A549 (cell line): ENCODE measurements at regions of chr15 and their contacts with region 1.

Region 1: GRCh38 chr15:59751552-59752413 is 62.7 kb upstream of the BNIP2 start:
- DNase-seq: peak; percentile 33 to 52
- ATAC-seq: peak; percentile 84 to 88; a peak in 5 of 6 replicates
- H3K4me3 ChIP-seq: no peak overlapping the region
- H3K27ac ChIP-seq: no peak overlapping the region
- H3K4me1 ChIP-seq: no peaks in the 10 kb centered on the region
- CTCF ChIP-seq: peak; percentile 34; the same call in 2 of the 3 replicates
- EP300 ChIP-seq: no peak
- POLR2A ChIP-seq: no peak
- RAD21 ChIP-seq: peak; percentile 40 to 58; a peak in 4 of 5 replicates

Region 2: DNA sequence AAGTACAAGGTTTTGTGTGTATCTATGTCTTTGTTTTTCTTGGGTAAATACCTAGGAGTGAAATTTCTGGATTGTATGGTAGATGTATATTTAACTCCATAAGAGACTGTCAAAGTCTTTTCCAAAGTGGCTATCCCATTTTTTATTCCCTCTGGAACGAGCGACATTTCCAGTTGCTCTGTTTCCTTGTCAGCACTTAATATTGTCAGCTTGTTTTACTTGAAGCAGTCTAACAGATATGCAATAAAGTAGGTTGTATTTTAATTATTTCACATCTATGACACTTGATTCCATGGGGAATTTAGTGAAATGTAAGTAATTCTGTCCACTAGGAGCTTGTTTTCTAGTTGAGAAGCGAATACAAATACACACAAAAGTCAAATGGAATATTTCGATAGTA is 44.2 kb before region 1 on chr15:
- CTCF ChIA-PET with region 1: no interaction called
- POLR2A ChIA-PET with region 1: no interaction called
- DNase-seq: no peak
- ATAC-seq: no peak
- H3K4me3 ChIP-seq: no peak overlapping the region
- H3K27ac ChIP-seq: no peak overlapping the region
- H3K4me1 ChIP-seq: peaks cover 18% of the 10 kb centered on the region
- CTCF ChIP-seq: no peak
- EP300 ChIP-seq: no peak
- POLR2A ChIP-seq: no peak
- RAD21 ChIP-seq: no peak

Region 3: DNA sequence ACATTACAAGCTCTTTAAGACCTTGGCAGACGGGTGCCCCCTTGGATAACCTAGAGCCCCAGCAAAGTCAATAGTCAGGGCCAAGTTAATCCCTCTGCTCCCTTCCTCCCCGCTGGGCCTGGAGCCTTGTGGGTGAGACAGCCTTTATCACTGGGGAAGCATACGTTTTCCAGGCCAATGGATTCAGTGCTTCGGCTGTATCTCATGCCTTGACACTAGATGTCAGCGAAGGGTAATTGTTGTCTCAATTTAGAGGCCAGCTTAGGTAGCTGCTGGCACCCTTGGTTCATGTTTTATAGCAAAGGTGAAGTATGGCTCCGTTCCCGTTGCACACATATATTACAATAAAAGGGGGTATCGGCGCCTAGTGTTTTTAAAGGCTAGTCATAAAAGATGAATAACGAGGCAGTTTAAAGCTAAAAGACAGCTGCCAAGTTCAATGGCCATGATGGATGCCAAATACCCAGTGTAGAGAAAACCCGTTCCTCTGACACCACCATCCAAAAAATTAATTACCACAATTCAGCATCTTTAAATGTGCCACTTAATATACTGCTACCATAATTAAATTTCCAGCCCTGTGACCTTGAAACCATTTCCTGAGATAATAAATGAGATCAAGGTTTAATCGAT is 10.4 kb before region 1 on chr15:
- CTCF ChIA-PET with region 1: interaction called, 45 read pairs
- POLR2A ChIA-PET with region 1: no interaction called
- DNase-seq: peak in 1 of 2 experiments; percentile 40
- ATAC-seq: peak; percentile 68 to 88
- H3K4me3 ChIP-seq: no peak overlapping the region
- H3K27ac ChIP-seq: no peak overlapping the region
- H3K4me1 ChIP-seq: no peaks in the 10 kb centered on the region
- CTCF ChIP-seq: peak; percentile 30; the same call in 1 of the 3 replicates
- EP300 ChIP-seq: no peak
- POLR2A ChIP-seq: no peak
- RAD21 ChIP-seq: peak; percentile 40 to 62; a peak in 4 of 5 replicates

Region 4: DNA sequence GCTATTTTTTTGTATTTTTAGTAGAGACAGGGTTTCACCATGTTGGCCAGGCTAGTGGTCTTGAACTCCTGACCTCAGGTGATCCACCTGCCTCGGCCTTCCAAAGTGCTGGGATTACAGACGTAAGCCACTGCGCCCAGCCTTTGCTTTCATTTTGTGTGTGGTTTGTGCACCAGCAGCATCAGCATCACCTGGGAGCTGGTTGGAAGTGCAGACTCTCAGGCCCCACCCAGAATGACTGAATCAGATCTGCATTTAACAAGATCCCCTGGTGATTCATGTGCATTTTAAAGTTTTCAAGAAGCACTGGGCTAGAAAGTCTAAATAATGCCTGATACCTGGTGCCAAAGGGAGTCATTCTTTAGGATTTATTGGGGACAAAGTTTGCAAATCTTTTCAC is 10.8 kb after region 1 on chr15:
- CTCF ChIA-PET with region 1: interaction called, 22 read pairs
- POLR2A ChIA-PET with region 1: no interaction called
- DNase-seq: no peak
- ATAC-seq: no peak
- H3K4me3 ChIP-seq: no peak overlapping the region
- H3K27ac ChIP-seq: no peak overlapping the region
- H3K4me1 ChIP-seq: no peaks in the 10 kb centered on the region
- CTCF ChIP-seq: no peak
- EP300 ChIP-seq: no peak
- POLR2A ChIP-seq: no peak
- RAD21 ChIP-seq: no peak

Region 5: GRCh38 chr15:59779110-59779509 is 27.3 kb after region 1 on chr15:
- CTCF ChIA-PET with region 1: no interaction called
- POLR2A ChIA-PET with region 1: no interaction called
- DNase-seq: no peak
- ATAC-seq: no peak; a peak in 1 of 6 replicates
- H3K4me3 ChIP-seq: no peak overlapping the region
- H3K27ac ChIP-seq: no peak overlapping the region
- H3K4me1 ChIP-seq: no peaks in the 10 kb centered on the region
- CTCF ChIP-seq: no peak
- EP300 ChIP-seq: no peak
- POLR2A ChIP-seq: no peak
- RAD21 ChIP-seq: no peak